Ascending aorta (tissue), 2 donors: ENCODE measurements at regions of chr2 and their contacts with region 1.

Region 1: GRCh38 chr2:98149333-98149697 is 62.3 kb downstream of the VWA3B start:
- DNase-seq: peak in 1 of 2 donors; percentile 82
- H3K4me3 ChIP-seq: peak overlapping the region; percentile 43 to 57
- H3K27ac ChIP-seq: peak overlapping the region; percentile 61 to 66
- H3K4me1 ChIP-seq: peaks cover 0 to 9% of the 10 kb centered on the region in 2 donors
- H3K27me3 ChIP-seq: no peaks in the 10 kb centered on the region
- CTCF ChIP-seq: no peak

Region 2: GRCh38 chr2:98102878-98103277 is 46.4 kb before region 1 on chr2:
- intact Hi-C with region 1: no loop called
- DNase-seq: no peak
- H3K4me3 ChIP-seq: no peak overlapping the region
- H3K27ac ChIP-seq: no peak overlapping the region
- H3K4me1 ChIP-seq: no peaks in the 10 kb centered on the region
- H3K27me3 ChIP-seq: no peaks in the 10 kb centered on the region
- CTCF ChIP-seq: no peak

Region 3: GRCh38 chr2:98201576-98201975 is 52.3 kb after region 1 on chr2:
- intact Hi-C with region 1: no loop called
- DNase-seq: no peak
- H3K4me3 ChIP-seq: no peak overlapping the region
- H3K27ac ChIP-seq: no peak overlapping the region
- H3K4me1 ChIP-seq: no peaks in the 10 kb centered on the region
- H3K27me3 ChIP-seq: no peaks in the 10 kb centered on the region
- CTCF ChIP-seq: no peak

Region 4: DNA sequence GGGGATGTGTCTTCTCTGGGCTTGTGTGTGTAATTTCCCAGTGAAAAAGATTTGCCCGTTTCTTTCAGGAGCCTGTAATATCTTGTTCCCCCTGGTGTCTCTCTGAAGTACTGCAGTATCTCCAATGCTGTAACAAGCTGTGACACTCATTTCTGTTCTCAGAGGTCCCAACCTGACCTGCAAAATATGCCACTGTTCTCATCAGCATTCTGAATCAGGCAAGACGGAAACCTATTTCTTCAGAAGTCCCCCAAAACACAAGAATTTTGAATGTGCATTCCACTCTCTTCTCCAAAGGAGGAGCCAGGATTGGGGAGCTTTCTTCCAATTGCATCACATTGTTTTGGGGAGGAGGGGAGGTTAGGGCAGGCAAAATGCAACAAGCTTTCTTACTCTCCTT is 120.0 kb after region 1 on chr2:
- intact Hi-C with region 1: loop called (anchors 5 kb)
- DNase-seq: no peak
- H3K4me3 ChIP-seq: no peak overlapping the region
- H3K27ac ChIP-seq: peak overlapping the region; percentile 62 to 65
- H3K4me1 ChIP-seq: peaks cover 0 to 4% of the 10 kb centered on the region in 2 donors
- H3K27me3 ChIP-seq: no peaks in the 10 kb centered on the region
- CTCF ChIP-seq: peak; percentile 39 to 74 (median 63)